Left cardiac atrium (tissue), 4 donors: ENCODE measurements at regions of chr17 and their contacts with region 1.

Region 1: GRCh38 chr17:45277216-45277849 is 15.4 kb upstream of the SPATA32 start:
- DNase-seq: peak; percentile 96
- ATAC-seq: peak; percentile 75 to 85

Region 2: DNA sequence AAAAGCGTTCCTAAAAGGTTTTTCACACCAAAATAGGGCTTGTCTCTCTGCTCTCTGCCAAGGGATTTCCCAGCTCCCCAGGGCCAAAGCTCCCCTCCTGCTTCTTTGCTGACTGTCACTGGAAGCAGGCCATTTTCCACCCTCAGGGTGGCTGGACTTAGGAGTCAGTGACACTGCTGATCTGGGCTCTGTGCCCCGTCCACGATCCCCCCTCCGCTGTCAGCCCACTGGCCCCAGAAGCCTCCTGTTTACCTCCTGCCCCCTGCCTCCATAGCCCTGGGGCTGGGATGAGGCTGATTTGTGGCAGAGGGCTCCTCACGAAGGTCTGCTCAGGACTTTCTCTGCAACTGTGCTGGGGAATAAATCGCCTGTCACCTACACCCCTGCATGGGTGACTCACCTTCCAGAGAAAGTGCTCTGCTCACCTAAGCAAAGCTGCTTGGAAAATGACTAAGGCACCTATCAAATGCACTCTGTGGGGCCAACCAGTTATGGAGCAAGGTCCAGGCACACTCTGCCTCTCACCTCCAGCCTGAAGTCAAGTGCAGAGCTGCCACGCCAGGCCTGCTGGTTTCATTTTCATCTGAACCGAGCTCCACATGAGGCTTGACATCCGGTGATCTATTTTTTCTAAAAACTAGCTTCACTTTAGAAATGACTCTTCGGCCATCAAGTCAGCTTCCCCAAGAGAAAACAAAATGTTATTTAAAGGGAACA is 34.6 kb after region 1 on chr17:
- intact Hi-C with region 1: loop called in 1 of 2 experiments (anchors 1 kb)
- DNase-seq: peak; percentile 60
- ATAC-seq: peak in 1 of 2 donors; percentile 8

Region 3: GRCh38 chr17:45317112-45317928 is 40.0 kb after region 1 on chr17:
- intact Hi-C with region 1: loop called in 1 of 2 experiments (anchors 1 kb)
- DNase-seq: peak; percentile 100
- ATAC-seq: peak; percentile 92 to 93